Caco-2 (cell line): ENCODE measurements at regions of chr10 and their contacts with region 1.

Region 1: GRCh38 chr10:14878266-14879054 is at the start of gene SUV39H2:
- DNase-seq: peak; percentile 96 to 99
- H3K4me3 ChIP-seq: peak within 1 kb of the TSS; percentile 93
- H3K4me3 Mint-ChIP-seq: peak within 1 kb of the TSS; percentile 99
- H3K27ac Mint-ChIP-seq: peak within 1 kb of the TSS; percentile 99
- H3K4me1 ChIP-seq: peaks cover 9% of the 10 kb centered on the region; the same call in 1 of the 2 replicates
- H3K4me1 Mint-ChIP-seq: peaks cover 14% of the 10 kb centered on the region
- H3K27me3 ChIP-seq: no peaks in the 10 kb centered on the region
- H3K27me3 Mint-ChIP-seq: no peaks in the 10 kb centered on the region
- CTCF ChIP-seq: peak in 1 of 2 experiments; percentile 6
- total RNA-seq, gene SUV39H2: 58.3 and 60.4 TPM in 2 replicates

Region 2: GRCh38 chr10:14604181-14605142 is 274.0 kb before region 1 on chr10:
- CTCF ChIA-PET with region 1: no interaction called
- POLR2A ChIA-PET with region 1: no interaction called
- intact Hi-C with region 1: no loop called
- DNase-seq: peak; percentile 79 to 89
- H3K4me3 ChIP-seq: peak overlapping the region; percentile 49
- H3K4me3 Mint-ChIP-seq: peak overlapping the region; percentile 80
- H3K27ac Mint-ChIP-seq: peak overlapping the region; percentile 43
- H3K4me1 ChIP-seq: peaks cover 51% of the 10 kb centered on the region
- H3K4me1 Mint-ChIP-seq: peaks cover 40% of the 10 kb centered on the region
- H3K27me3 ChIP-seq: no peaks in the 10 kb centered on the region
- H3K27me3 Mint-ChIP-seq: no peaks in the 10 kb centered on the region
- CTCF ChIP-seq: no peak

Region 3: DNA sequence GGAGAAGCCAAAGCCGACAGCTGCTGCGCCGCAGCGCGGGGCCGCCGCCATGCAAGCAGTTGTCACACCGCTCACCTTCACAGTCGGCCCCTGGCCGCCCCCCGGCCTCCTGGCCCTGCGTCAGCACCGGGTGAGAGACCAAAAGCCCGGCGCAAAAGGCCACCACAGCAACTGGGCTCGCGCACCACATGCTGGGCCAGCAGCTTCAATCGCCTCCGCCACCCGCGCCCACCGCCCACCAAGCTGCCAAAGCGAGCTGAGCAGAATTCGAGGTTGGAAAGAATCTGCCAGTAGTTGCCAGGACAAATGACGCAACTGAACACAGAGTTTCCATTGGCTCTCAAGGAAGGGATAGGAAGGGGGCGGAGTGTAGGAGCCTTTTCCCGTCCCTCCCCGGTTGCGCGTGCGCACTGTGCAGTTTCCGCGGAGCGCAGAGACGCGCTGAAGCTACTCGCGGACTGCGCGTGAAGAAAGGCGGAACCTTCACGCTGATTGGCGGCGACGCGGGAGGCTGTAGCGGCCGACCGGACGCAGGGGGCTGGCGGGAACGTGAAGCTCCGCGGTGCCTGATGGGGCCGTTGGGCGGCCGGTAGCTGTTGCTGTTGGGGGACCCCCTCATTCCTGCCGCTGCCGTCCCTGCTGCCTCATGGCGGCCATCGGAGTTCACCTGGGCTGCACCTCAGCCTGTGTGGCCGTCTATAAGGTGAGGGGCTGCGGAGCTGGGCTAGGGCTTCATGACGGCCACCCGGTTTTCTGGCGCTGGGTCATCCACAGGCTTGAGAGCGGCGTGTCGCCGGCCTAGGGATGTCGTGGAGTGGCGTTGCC is 40.5 kb before region 1 on chr10 and contains the starts of genes CDNF, HSPA14 and MSANTD7:
- CTCF ChIA-PET with region 1: interaction called, 13 read pairs
- POLR2A ChIA-PET with region 1: interaction called, 64 read pairs
- intact Hi-C with region 1: loop called (anchors 1 kb)
- DNase-seq: peak; percentile 100
- H3K4me3 ChIP-seq: peak within 1 kb of the TSS; percentile 91
- H3K4me3 Mint-ChIP-seq: peak within 1 kb of the TSS; percentile 70
- H3K27ac Mint-ChIP-seq: peak within 1 kb of the TSS; percentile 91
- H3K4me1 ChIP-seq: no peaks in the 10 kb centered on the region; the same call in 1 of the 2 replicates
- H3K4me1 Mint-ChIP-seq: peaks cover 15% of the 10 kb centered on the region
- H3K27me3 ChIP-seq: no peaks in the 10 kb centered on the region
- H3K27me3 Mint-ChIP-seq: no peaks in the 10 kb centered on the region
- CTCF ChIP-seq: no peak
- total RNA-seq, gene CDNF: 3.4 and 3.9 TPM in 2 replicates
- total RNA-seq, gene HSPA14: 36.9 and 39.3 TPM in 2 replicates
- total RNA-seq, gene MSANTD7: 30.0 and 32.8 TPM in 2 replicates

Region 4: GRCh38 chr10:14954001-14954770 is 75.7 kb after region 1 on chr10 and contains the start of gene DCLRE1C:
- CTCF ChIA-PET with region 1: interaction called, 5 read pairs
- POLR2A ChIA-PET with region 1: interaction called, 25 read pairs
- intact Hi-C with region 1: loop called (anchors 1 kb)
- DNase-seq: peak; percentile 98
- H3K4me3 ChIP-seq: peak within 1 kb of the TSS; percentile 85
- H3K4me3 Mint-ChIP-seq: peak within 1 kb of the TSS; percentile 87
- H3K27ac Mint-ChIP-seq: peak within 1 kb of the TSS; percentile 99
- H3K4me1 ChIP-seq: peaks cover 4% of the 10 kb centered on the region; the same call in 1 of the 2 replicates
- H3K4me1 Mint-ChIP-seq: peaks cover 6% of the 10 kb centered on the region
- H3K27me3 ChIP-seq: no peaks in the 10 kb centered on the region
- H3K27me3 Mint-ChIP-seq: no peaks in the 10 kb centered on the region
- CTCF ChIP-seq: no peak
- total RNA-seq, gene DCLRE1C: 23.7 and 25.8 TPM in 2 replicates

Region 5: DNA sequence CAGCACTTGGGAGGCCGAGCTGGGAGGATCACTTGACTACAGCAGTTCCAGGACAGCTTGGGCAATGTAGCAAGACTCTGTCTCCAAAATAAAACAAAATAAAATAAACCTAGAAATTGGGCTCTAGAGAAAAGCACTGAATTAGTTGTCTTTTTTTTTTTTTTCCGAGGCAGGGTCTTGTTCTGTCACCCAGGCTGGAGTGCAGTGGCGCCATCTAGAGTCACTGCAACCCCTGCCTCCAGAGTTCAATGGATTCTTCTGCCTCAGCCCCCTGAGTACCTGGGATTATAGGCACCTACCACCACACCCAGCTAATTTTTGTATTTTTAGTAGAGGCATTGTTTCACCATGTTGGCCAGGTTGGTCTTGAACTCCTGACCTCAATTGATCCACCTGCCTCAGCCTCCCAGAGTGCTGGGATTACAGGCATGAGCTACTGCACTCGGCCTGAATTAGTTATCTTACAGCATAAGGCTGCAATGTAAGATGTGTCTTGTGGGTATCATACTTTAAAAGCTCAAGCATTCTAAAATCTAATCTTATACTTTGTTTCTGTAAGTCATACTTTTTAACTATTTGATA is 93.5 kb after region 1 on chr10:
- CTCF ChIA-PET with region 1: no interaction called
- POLR2A ChIA-PET with region 1: no interaction called
- intact Hi-C with region 1: loop called (anchors 5 kb)
- DNase-seq: peak; percentile 63 to 77
- H3K4me3 ChIP-seq: no peak overlapping the region
- H3K4me3 Mint-ChIP-seq: no peak overlapping the region
- H3K27ac Mint-ChIP-seq: no peak overlapping the region
- H3K4me1 ChIP-seq: no peaks in the 10 kb centered on the region
- H3K4me1 Mint-ChIP-seq: no peaks in the 10 kb centered on the region
- H3K27me3 ChIP-seq: no peaks in the 10 kb centered on the region
- H3K27me3 Mint-ChIP-seq: no peaks in the 10 kb centered on the region
- CTCF ChIP-seq: peak; percentile 78 to 90

Region 6: GRCh38 chr10:15168781-15169554 is 290.5 kb after region 1 on chr10:
- CTCF ChIA-PET with region 1: no interaction called
- POLR2A ChIA-PET with region 1: interaction called, 12 read pairs
- intact Hi-C with region 1: no loop called
- DNase-seq: peak; percentile 97 to 99
- H3K4me3 ChIP-seq: peak overlapping the region; percentile 11
- H3K4me3 Mint-ChIP-seq: peak overlapping the region; percentile 80
- H3K27ac Mint-ChIP-seq: peak overlapping the region; percentile 79
- H3K4me1 ChIP-seq: peaks cover 5% of the 10 kb centered on the region; the same call in 1 of the 2 replicates
- H3K4me1 Mint-ChIP-seq: peaks cover 6% of the 10 kb centered on the region
- H3K27me3 ChIP-seq: no peaks in the 10 kb centered on the region
- H3K27me3 Mint-ChIP-seq: no peaks in the 10 kb centered on the region
- CTCF ChIP-seq: no peak

Region 7: GRCh38 chr10:15313843-15314242 is 435.4 kb after region 1 on chr10:
- CTCF ChIA-PET with region 1: no interaction called
- POLR2A ChIA-PET with region 1: no interaction called
- intact Hi-C with region 1: no loop called
- DNase-seq: no peak
- H3K4me3 ChIP-seq: no peak overlapping the region
- H3K4me3 Mint-ChIP-seq: no peak overlapping the region
- H3K27ac Mint-ChIP-seq: no peak overlapping the region
- H3K4me1 ChIP-seq: no peaks in the 10 kb centered on the region
- H3K4me1 Mint-ChIP-seq: peaks cover 18% of the 10 kb centered on the region
- H3K27me3 ChIP-seq: no peaks in the 10 kb centered on the region
- H3K27me3 Mint-ChIP-seq: no peaks in the 10 kb centered on the region
- CTCF ChIP-seq: no peak